Gastrocnemius medialis (tissue), 4 donors: ENCODE measurements at regions of chr18 and their contacts with region 1.

Region 1: DNA sequence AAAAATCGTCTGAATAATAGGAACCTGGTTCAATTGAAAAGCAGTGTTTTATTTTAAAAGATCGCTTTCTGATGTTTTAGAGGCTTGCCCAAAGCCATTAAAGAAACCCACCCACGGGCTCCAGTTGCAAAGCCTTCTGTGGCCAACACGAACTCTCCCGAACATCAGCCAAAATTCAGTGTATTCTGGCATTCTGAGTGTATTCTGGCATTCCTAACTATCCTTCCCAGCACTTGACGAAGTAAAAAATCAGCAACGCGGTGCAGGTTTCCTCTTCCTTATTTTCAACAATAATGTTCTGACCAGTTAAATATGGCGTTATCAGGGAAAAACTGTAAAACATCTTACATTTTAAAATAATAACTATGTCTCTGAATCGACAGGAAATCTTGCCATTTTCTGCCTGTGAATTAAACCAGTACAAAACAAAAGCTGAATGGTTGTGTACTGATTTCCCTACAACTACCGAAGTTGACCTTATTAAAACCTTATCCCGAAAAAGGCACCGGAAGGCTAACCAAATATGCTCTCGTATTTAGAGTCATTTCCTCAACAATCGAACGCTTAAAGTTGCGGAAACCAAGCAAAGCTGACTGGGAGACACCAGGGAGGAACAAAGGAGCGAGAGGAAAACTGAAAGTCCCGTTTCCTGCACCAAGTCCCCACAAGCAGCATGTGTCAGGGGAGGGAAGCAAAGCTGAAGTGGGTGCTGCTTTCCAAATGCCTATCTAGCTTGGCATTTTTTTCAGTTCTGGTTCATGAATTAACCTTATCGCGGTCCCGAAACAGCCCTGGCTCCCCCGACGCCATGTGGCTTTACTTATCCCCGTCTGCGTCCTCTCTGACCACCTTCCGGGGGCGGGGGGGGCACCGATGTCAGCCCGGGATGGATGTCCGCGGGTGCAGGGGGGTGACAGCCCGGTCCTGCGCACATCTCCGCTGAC is 44.3 kb downstream of the ZNF516 start:
- DNase-seq: peak; percentile 55 to 77
- ATAC-seq: peak; percentile 51 to 64
- H3K4me3 ChIP-seq: peak overlapping the region; percentile 70 to 85 (median 76)
- H3K27ac ChIP-seq: peak overlapping the region; percentile 85 to 92 (median 92)
- H3K4me1 ChIP-seq: peaks cover 66 to 72% of the 10 kb centered on the region in 2 donors
- H3K27me3 ChIP-seq: no peaks in the 10 kb centered on the region
- CTCF ChIP-seq: no peak
- POLR2A ChIP-seq: peak; percentile 26 to 51

Region 2: DNA sequence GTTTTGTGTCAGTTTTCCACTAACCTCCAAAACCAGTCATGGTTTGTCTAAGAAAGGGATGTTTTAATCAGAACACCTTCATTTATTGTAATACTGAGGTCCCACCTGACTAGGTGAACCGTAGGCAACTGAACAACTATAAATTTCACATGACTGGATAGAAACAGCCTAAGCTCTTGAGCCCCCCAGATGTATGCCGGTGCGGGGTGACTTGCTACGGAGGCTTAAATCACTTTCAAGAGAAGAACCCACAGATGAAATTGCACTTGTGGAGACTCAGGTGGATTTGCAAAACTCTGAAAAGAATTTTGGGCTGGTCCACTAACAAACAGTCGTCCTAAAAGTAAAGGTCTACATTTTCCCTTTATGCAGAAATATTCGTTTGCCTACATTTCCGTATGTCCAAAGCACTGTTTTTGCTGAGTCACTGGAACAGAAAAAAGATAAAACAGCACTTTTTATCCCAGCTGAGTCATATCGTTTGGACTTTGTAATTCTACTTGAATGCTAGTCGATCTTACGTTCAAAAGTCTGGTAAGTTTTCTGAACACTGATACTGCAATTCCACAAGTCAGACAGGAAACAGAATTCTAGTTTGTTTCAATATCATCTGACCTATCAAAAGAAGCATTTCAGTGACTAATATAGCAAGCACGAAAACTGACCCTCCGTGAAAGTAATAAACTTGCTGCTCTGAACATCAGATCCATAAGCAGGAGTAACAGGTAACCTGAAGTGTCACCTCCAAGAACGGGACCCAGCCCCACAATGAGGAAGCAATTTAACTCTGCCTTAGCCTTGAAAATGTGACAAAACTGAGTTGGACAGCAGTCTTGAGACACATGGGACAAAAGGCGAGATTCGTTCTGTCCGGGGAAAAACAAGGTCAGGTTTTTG is 26.2 kb after region 1 on chr18:
- in situ Hi-C with region 1: no loop called
- intact Hi-C with region 1: loop called (anchors 2 kb)
- DNase-seq: no peak
- ATAC-seq: peak; percentile 21 to 51
- H3K4me3 ChIP-seq: peak overlapping the region; percentile 14 to 36 (median 34)
- H3K27ac ChIP-seq: peak overlapping the region; percentile 67 to 79 (median 72)
- H3K4me1 ChIP-seq: peaks cover 38 to 45% of the 10 kb centered on the region in 2 donors
- H3K27me3 ChIP-seq: no peaks in the 10 kb centered on the region
- CTCF ChIP-seq: no peak
- POLR2A ChIP-seq: no peak

Region 3: DNA sequence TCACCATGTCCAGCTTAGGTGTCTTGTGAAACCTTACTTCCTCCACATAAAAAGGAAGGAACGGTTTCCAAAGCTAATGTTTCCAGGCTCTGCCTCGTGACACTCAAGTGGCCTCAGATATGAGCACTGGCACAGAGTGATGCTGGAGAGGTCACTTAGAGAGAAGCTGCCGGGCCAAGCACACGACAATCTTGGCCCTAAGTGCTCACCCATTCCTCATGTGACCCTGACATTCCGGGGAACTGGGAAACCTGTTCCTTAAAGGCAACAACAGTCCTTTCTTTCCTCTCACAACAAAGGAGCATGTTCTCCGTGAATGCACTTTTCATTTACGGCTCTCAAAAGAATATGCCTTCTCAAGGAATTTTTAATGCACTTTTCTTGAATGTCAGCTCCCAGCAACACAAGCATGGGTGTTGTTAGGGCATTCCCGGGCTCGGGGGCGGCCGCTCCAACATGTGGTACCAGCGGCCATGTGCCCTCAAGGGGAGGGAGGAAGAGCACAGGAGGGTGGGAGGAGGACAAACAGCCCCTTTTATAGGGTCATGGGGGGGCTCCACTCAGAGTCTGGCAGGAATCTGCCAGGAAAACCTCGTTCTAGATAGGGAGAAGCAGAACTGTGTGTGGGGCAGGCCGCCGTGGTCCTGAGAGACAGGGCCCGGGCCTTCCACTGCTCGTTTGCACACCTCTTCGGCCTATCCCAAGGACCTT is 563.2 kb after region 1 on chr18:
- in situ Hi-C with region 1: no loop called
- intact Hi-C with region 1: loop called (anchors 5 kb)
- DNase-seq: peak; percentile 92 to 94
- ATAC-seq: peak; percentile 97 to 98
- H3K4me3 ChIP-seq: peak overlapping the region; percentile 12 to 38 (median 30)
- H3K27ac ChIP-seq: peak overlapping the region; percentile 84 to 95 (median 90)
- H3K4me1 ChIP-seq: peaks cover 32 to 33% of the 10 kb centered on the region in 2 donors
- H3K27me3 ChIP-seq: no peaks in the 10 kb centered on the region
- CTCF ChIP-seq: peak in 1 of 5 experiments; percentile 14
- POLR2A ChIP-seq: peak in 1 of 2 donors; percentile 51